ENCODE measurements at regions of chr2 and their contacts with region 1.

Region 1: DNA sequence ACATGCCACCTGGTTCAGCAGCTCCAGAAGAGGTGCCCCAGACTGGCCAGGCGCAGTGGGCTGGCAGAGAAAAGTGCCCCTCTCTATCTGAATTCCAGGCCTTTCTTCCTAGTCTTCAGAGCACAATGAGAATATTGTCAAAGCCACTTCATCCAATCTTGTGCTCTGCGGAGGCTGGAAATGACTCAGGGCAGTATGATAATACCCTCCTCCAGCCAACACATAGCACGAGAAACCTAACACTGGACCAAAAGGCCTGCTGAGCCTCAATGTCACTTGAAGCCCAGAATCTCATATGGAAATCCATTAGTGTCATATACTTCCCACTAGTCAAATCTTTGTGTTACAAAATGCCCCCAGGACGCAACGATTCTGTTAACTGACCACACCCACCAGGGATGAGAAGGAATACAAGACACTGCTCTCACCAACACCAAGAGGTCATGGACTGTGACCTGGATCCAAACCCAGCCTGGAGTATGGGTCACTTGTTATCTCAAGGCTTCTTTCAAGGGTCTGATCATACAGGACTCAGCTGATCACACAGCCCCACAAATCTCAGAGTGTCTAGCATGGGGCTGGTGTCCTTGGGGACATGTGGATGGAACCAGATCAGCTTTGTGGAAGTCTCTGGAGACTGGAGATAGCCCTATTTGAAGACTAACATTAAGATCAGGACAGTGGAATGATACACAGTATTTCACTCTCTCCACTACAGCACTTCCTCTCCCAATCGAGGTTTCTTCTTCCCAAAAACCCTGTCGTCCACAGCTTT is 10.1 kb downstream of the KIF3C start:
- DNase-seq: no peak
- H3K4me3 Mint-ChIP-seq: no peak overlapping the region
- H3K27ac Mint-ChIP-seq: no peak overlapping the region
- H3K4me1 Mint-ChIP-seq: peaks cover 6% of the 10 kb centered on the region
- H3K27me3 Mint-ChIP-seq: no peaks in the 10 kb centered on the region

Region 2: DNA sequence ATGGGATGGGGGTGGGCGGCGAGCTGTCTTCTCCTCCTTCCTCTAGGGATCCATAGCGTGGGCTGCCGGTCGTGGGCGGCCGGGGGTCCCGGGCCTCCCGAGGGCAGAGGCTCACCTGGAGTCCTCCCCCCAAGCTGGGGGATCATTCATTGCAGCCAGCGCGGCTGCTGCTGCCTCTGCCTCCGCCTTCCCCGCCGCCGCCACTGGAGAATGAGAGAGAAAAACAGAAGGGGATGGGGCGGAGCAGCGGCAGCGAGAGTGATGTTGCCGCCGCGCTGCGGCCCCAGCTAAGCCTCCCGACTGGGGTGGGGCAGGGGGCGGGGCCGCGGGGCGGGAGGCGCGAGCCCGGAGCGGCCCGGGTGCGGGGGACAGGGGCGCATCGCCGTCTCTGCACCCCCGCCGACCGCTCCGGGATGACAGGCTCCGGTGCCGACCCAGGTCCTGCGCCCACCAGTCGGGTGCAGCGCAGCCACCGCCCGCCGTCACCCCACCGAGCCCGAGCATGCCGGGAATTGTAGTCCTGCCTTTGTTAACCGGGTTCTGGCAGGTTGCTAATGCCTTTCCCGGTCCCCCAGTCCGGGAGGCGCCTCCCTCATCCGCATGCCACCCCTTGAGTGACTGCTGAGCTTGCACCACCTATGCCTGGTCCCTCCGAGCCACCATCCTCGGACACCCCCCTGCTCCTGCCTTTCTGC is 10.2 kb after region 1 on chr2 and contains the start of gene KIF3C:
- CTCF ChIA-PET with region 1: interaction called, 3 read pairs
- POLR2A ChIA-PET with region 1: interaction called, 13 read pairs
- DNase-seq: peak; percentile 80
- H3K4me3 Mint-ChIP-seq: peak within 1 kb of the TSS; percentile 86
- H3K27ac Mint-ChIP-seq: peak within 1 kb of the TSS; percentile 67
- H3K4me1 Mint-ChIP-seq: peaks cover 18% of the 10 kb centered on the region
- H3K27me3 Mint-ChIP-seq: peaks cover 4% of the 10 kb centered on the region
- total RNA-seq, gene KIF3C: 10.3 to 10.7 TPM

Region 3: DNA sequence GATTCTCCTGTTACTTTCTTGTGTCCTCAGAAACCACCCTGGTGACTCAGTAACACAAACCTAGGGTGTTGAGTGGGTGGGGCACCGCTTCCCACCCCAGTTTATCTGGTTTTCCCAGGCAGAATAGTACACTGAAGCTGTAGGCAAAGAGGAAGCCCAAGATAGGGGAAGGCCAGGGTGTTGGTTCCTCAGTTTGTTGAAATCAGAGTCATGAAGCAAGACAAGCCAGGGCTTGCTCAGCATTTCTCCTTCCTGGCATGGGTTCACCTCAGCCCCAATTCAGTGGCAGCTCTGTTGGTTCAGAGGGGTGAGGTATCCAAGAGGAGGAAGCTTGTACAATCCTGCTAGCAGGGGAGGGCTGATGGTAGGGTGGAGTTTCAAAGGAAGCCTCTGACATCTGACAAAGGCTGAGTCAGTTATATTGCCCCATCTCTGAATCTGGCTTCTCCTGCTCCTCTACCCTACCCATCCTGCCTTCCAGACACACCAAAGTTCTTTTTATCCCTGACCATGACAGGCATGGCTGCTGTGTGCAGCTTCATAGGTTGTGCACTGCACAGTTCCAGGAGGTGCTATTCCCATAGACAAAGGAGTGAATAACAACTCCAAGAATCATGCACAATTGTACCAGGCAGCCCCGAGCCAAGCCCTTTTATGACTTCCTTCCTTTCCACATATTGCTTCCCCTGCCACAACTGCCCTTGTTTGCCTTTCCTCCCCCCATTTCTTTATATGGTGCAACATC is 36.8 kb after region 1 on chr2:
- CTCF ChIA-PET with region 1: no interaction called
- POLR2A ChIA-PET with region 1: no interaction called
- DNase-seq: no peak
- H3K4me3 Mint-ChIP-seq: no peak overlapping the region
- H3K27ac Mint-ChIP-seq: no peak overlapping the region
- H3K4me1 Mint-ChIP-seq: peaks cover 14% of the 10 kb centered on the region
- H3K27me3 Mint-ChIP-seq: no peaks in the 10 kb centered on the region

Region 4: GRCh38 chr2:26196683-26197418 is 224.6 kb after region 1 on chr2:
- CTCF ChIA-PET with region 1: no interaction called
- POLR2A ChIA-PET with region 1: no interaction called
- DNase-seq: no peak
- H3K4me3 Mint-ChIP-seq: no peak overlapping the region
- H3K27ac Mint-ChIP-seq: no peak overlapping the region
- H3K4me1 Mint-ChIP-seq: no peaks in the 10 kb centered on the region
- H3K27me3 Mint-ChIP-seq: no peaks in the 10 kb centered on the region

Measured in activated CD4-positive, alpha-beta memory T cell treated with anti-CD3 and anti-CD28 coated beads, Interleukin-2, amount 10 ng/mL, durations not matched to agents 7 days and 5 days (primary cell).